Activated CD4-positive, alpha-beta T cell treated with anti-CD3 and anti-CD28 coated beads for 36 hours (primary cell): ENCODE measurements at regions of chr17 and their contacts with region 1.

Region 1: DNA sequence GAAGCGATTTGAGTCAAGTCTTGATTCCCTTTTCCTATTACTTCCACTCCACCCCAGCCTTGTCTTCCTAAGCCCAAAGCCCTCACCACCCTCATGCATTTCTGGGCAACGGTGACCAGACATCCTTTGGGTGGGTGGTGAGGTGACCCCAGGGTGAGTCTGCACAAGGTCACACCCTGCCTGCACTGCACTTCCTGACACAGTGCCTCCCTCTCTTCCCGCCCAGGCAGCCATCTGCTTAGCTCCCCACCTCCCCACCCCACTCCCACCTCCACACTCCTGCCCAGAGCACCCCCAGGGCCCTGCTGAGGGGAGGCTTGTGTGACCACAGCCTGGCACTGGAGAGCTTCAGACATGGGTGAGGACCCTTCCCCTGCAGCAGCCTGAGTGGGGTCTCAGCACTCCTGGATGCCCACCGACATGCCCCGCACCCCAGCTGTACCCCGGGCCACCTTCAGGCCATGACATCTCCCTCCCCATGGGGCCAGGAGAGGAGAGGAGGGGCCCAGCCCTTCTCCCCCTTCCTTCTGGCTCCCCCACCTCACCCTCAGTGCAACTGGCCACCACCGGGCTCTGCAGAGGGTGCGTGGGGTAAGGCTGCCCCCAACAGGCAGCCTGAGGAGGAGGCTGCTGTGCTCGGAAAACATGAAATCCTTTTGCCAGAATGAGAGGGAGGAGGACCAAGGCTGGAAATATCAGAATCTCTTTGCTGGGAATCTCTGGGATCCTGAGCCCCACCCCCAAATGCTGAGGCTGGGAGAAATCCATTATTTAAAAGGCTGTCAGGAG is 68.6 kb downstream of the CCT6B start:
- DNase-seq: peak; percentile 53
- ATAC-seq: no peak
- H3K4me3 Mint-ChIP-seq: no peak overlapping the region
- H3K27ac Mint-ChIP-seq: no peak overlapping the region
- H3K4me1 Mint-ChIP-seq: no peaks in the 10 kb centered on the region
- H3K27me3 Mint-ChIP-seq: peaks cover 16% of the 10 kb centered on the region

Region 2: DNA sequence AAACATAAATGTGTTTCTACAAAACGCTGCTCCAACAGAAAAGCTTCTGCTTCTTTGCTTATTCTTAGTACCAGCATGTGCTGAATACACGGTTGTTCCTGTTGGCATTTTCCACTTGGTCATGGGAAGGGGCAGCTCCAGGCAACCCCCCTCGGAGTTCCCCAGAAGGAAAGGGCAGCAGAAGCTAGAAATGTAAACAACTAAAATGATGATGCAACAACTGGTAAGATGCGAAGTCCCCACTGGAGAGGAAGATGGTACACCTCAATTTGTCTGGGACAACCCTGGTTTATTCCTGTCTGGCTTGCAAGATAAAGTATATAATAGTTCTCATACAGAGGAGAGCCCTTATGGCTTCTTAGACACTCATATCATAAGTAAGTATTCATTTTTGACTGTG is 545.6 kb before region 1 on chr17:
- CTCF ChIA-PET with region 1: no interaction called
- POLR2A ChIA-PET with region 1: no interaction called
- intact Hi-C with region 1: no loop called
- DNase-seq: no peak
- ATAC-seq: no peak
- H3K4me3 Mint-ChIP-seq: no peak overlapping the region
- H3K27ac Mint-ChIP-seq: no peak overlapping the region
- H3K4me1 Mint-ChIP-seq: no peaks in the 10 kb centered on the region
- H3K27me3 Mint-ChIP-seq: peaks cover 29% of the 10 kb centered on the region

Region 3: DNA sequence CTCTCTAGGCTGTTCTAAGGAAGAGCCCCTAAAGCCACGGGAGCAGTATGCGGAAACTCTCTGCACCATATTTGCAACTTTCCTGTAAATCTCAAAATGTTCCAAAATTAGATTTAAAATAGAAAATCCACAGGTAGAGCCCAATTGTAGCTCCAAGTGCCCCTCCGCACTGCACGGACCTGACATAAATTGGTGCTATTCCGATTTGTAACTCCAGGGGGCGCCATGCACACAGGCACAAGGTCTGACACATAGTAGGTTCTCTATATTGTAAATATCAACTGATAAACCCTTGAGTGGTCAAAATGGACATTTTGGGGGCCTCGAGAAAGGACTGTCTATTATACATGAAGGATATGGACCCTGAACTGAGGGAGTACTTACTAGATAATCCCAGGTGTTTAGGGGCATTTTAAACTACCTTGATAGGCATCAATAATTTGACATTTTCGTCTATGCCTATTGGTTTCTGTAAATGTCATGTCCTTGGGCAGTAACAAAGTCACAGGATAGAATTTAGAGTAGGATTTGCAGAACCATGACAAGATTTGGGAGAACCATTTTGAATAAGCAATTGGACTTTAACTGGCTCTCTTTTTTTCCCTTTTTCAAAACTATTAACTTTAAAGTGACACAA is 349.8 kb before region 1 on chr17:
- CTCF ChIA-PET with region 1: interaction called, 7 read pairs
- POLR2A ChIA-PET with region 1: no interaction called
- intact Hi-C with region 1: loop called (anchors 2 to 5 kb)
- DNase-seq: peak; percentile 68
- ATAC-seq: peak; percentile 47
- H3K4me3 Mint-ChIP-seq: no peak overlapping the region
- H3K27ac Mint-ChIP-seq: no peak overlapping the region
- H3K4me1 Mint-ChIP-seq: no peaks in the 10 kb centered on the region
- H3K27me3 Mint-ChIP-seq: peaks cover 22% of the 10 kb centered on the region

Region 4: GRCh38 chr17:34703533-34703932 is 189.1 kb before region 1 on chr17:
- CTCF ChIA-PET with region 1: no interaction called
- POLR2A ChIA-PET with region 1: no interaction called
- intact Hi-C with region 1: no loop called
- DNase-seq: peak; percentile 60
- ATAC-seq: no peak
- H3K4me3 Mint-ChIP-seq: no peak overlapping the region
- H3K27ac Mint-ChIP-seq: no peak overlapping the region
- H3K4me1 Mint-ChIP-seq: no peaks in the 10 kb centered on the region
- H3K27me3 Mint-ChIP-seq: peaks cover 26% of the 10 kb centered on the region

Region 5: DNA sequence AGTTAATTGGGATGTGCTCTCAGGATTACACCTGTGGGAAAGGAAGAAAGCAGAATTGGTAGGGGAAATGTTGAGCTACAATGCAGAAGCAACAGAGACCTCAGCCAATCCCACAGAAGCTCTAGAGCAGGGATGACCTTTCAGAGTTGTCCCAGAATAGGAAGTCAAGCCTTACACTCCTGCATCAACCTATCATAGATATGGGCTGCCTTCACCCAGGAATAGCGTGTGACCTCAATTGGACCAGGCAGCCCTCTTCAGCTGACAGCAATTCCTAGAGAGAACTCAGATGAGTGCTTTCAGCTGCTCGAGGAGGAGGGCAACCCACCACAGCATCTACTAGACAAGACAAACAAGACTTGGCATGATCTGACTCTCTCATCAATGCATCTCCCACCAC is 123.6 kb before region 1 on chr17:
- CTCF ChIA-PET with region 1: no interaction called
- POLR2A ChIA-PET with region 1: no interaction called
- intact Hi-C with region 1: no loop called
- DNase-seq: no peak
- ATAC-seq: no peak
- H3K4me3 Mint-ChIP-seq: no peak overlapping the region
- H3K27ac Mint-ChIP-seq: no peak overlapping the region
- H3K4me1 Mint-ChIP-seq: no peaks in the 10 kb centered on the region
- H3K27me3 Mint-ChIP-seq: peaks cover 17% of the 10 kb centered on the region